CD8-positive, alpha-beta memory T cell (primary cell): ENCODE measurements at regions of chr1 and their contacts with region 1.

Region 1: DNA sequence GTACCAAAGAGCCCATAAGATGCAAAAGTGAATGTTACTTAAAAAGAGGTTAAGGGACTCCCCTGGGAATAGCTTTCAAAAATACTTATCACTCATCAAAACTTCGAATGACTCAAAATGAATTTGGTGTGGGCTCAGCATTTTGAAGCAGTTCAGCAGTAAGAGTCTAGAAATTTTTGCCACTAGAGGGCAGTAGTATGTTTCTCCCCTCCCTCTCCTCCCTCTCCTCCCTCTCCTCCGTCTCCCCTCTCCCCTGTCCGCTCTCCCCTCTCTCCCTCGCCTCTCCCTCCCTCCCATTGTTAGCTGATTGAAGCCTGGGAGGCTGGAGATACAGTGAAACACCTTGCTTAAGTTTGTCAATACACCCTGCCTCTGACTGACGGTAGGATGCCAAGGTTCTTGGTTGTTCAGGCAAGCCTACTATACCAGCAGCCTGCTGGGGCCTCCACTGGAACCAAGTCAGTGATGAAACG is 70.8 kb upstream of the TENT5C start:
- DNase-seq: peak in 4 of 5 donors; percentile 5 to 61 (median 54)
- H3K4me3 ChIP-seq: no peak overlapping the region
- H3K4me3 Mint-ChIP-seq: no peak overlapping the region
- H3K27ac ChIP-seq: no peak overlapping the region
- H3K27ac Mint-ChIP-seq: peak overlapping the region in 2 of 8 donors; percentile 9 to 26
- H3K4me1 ChIP-seq: peaks cover 20% of the 10 kb centered on the region
- H3K4me1 Mint-ChIP-seq: peaks cover 0 to 4% (median 0%) of the 10 kb centered on the region in 3 donors
- H3K27me3 ChIP-seq: no peaks in the 10 kb centered on the region
- H3K27me3 Mint-ChIP-seq: no peaks in the 10 kb centered on the region

Region 2: DNA sequence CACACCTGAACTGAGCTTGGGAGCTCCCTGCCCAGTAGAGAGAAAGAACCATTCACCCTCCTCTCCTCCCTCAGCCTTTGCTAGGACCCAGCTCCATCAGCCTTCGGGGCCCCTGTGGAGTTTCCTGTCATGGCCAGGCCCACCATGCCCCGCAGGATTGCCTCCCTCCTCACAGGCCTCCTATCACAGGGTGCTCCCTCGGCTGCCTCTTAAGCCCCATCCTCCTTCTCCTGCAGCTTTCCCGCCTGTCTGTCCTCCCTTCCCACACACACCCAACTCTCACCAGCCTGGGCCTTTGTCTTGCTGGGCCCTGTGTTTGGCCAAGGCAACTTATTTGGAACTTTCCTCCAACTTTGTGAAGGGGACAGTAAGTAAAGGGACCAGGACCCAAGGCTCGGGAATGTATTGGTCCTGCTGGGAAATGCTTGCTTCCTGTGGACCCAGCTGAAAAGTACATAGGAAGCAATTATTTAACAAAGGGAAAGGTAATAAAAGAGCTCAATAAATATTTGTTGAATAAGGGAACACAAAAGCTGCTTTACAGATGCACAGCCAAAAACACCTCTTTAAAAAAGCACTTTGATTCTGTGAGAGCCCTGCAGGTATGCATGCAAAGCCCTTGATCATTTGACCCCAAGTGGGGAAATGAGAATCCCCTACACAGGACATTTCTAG is 39.3 kb after region 1 on chr1:
- CTCF ChIA-PET with region 1: interaction called, 13 read pairs
- POLR2A ChIA-PET with region 1: no interaction called
- DNase-seq: no peak
- H3K4me3 ChIP-seq: no peak overlapping the region
- H3K4me3 Mint-ChIP-seq: no peak overlapping the region
- H3K27ac ChIP-seq: no peak overlapping the region
- H3K27ac Mint-ChIP-seq: peak overlapping the region in 4 of 8 donors; percentile 0 to 78 (median 70)
- H3K4me1 ChIP-seq: peaks cover 16% of the 10 kb centered on the region
- H3K4me1 Mint-ChIP-seq: peaks cover 14 to 27% (median 21%) of the 10 kb centered on the region in 3 donors
- H3K27me3 ChIP-seq: no peaks in the 10 kb centered on the region
- H3K27me3 Mint-ChIP-seq: no peaks in the 10 kb centered on the region

Region 3: GRCh38 chr1:117605774-117606648 is 71.0 kb after region 1 on chr1 and contains the start of gene TENT5C:
- CTCF ChIA-PET with region 1: interaction called, 15 read pairs
- POLR2A ChIA-PET with region 1: no interaction called
- DNase-seq: peak; percentile 98 to 99 (median 99)
- H3K4me3 ChIP-seq: peak within 1 kb of the TSS; percentile 93
- H3K4me3 Mint-ChIP-seq: peak within 1 kb of the TSS; percentile 91 to 99 (median 98)
- H3K27ac ChIP-seq: peak within 1 kb of the TSS; percentile 96
- H3K27ac Mint-ChIP-seq: peak within 1 kb of the TSS; percentile 96 to 100 (median 98)
- H3K4me1 ChIP-seq: peaks cover 36% of the 10 kb centered on the region
- H3K4me1 Mint-ChIP-seq: peaks cover 45 to 53% (median 51%) of the 10 kb centered on the region in 3 donors
- H3K27me3 ChIP-seq: no peaks in the 10 kb centered on the region
- H3K27me3 Mint-ChIP-seq: peaks cover 0 to 8% of the 10 kb centered on the region in 2 donors
- total RNA-seq, gene TENT5C: 3.7 to 4.1 TPM

Region 4: GRCh38 chr1:117654493-117655219 is 119.6 kb after region 1 on chr1:
- CTCF ChIA-PET with region 1: interaction called, 15 read pairs
- POLR2A ChIA-PET with region 1: no interaction called
- DNase-seq: peak in 1 of 5 donors; percentile 43
- H3K4me3 ChIP-seq: peak overlapping the region; percentile 3
- H3K4me3 Mint-ChIP-seq: peak overlapping the region; percentile 29 to 87 (median 73)
- H3K27ac ChIP-seq: peak overlapping the region; percentile 22
- H3K27ac Mint-ChIP-seq: peak overlapping the region; percentile 78 to 98 (median 97)
- H3K4me1 ChIP-seq: peaks cover 91% of the 10 kb centered on the region
- H3K4me1 Mint-ChIP-seq: peaks cover 86 to 93% (median 91%) of the 10 kb centered on the region in 3 donors
- H3K27me3 ChIP-seq: no peaks in the 10 kb centered on the region
- H3K27me3 Mint-ChIP-seq: peaks cover 0 to 4% of the 10 kb centered on the region in 2 donors

Region 5: GRCh38 chr1:117681143-117681542 is 146.1 kb after region 1 on chr1:
- CTCF ChIA-PET with region 1: interaction called, 95 read pairs
- POLR2A ChIA-PET with region 1: no interaction called
- DNase-seq: no peak
- H3K4me3 ChIP-seq: no peak overlapping the region
- H3K4me3 Mint-ChIP-seq: no peak overlapping the region
- H3K27ac ChIP-seq: no peak overlapping the region
- H3K27ac Mint-ChIP-seq: peak overlapping the region in 1 of 8 donors; percentile 48
- H3K4me1 ChIP-seq: no peaks in the 10 kb centered on the region
- H3K4me1 Mint-ChIP-seq: peaks cover 0 to 4% (median 3%) of the 10 kb centered on the region in 3 donors
- H3K27me3 ChIP-seq: no peaks in the 10 kb centered on the region
- H3K27me3 Mint-ChIP-seq: peaks cover 0 to 3% of the 10 kb centered on the region in 2 donors